ENCODE measurements at regions of chr21 and their contacts with region 1.

Region 1: DNA sequence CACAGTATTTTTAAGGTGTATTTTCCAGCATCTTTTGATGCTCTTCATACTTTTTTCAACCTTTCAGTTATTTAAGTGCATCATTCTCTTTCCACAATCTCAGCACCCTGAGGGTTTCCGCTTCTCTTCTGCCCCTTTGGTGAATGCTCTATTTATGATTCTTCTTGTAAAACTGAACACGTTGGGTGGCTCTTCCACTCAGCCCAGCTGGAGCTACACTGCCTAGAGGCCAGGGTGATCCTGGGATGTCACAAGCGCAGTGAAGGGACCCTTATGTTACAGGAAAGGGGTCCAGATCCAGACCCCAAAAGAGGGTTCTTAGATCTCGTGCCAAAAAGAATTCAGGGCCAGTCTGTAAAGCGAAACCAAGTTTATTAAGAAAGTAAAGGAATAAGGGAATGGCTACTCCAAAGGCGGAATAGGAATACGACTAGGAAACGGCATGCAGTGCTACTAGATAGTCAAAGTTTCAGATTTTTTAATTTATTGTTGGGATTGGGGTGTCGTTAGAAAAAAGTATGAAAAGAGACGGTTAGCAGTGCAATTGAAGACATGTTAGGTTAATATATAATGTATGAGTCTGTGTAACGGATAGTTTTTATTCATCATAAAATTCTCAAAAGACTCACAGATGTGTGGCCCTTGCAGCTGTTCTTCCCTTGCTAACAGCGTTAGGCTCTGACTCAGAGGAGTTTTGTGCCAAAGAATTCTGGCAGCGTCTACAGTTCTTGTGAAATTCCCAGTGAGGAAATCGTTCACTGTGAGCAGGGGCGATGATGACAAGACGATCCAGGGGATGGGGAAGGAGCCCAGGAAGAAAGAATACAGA is 14.4 kb upstream of the ERVH48-1 start:
- DNase-seq: peak; percentile 73 to 94
- H3K4me3 ChIP-seq: no peak overlapping the region
- H3K27ac ChIP-seq: peak overlapping the region in 3 of 5 donors; percentile 65 to 76 (median 75)
- H3K4me1 ChIP-seq: peaks cover 0 to 12% (median 5%) of the 10 kb centered on the region in 4 donors
- H3K27me3 ChIP-seq: no peaks in the 10 kb centered on the region
- CTCF ChIP-seq: no peak
- EP300 ChIP-seq: no peak
- POLR2A ChIP-seq: no peak

Region 2: GRCh38 chr21:42570841-42571387 is 368.9 kb before region 1 on chr21:
- intact Hi-C with region 1: no loop called
- DNase-seq: peak; percentile 30 to 73
- H3K4me3 ChIP-seq: no peak overlapping the region
- H3K27ac ChIP-seq: no peak overlapping the region
- H3K4me1 ChIP-seq: no peaks in the 10 kb centered on the region
- H3K27me3 ChIP-seq: no peaks in the 10 kb centered on the region
- CTCF ChIP-seq: no peak
- EP300 ChIP-seq: no peak
- POLR2A ChIP-seq: no peak

Region 3: GRCh38 chr21:42988236-42988965 is 48.6 kb after region 1 on chr21:
- intact Hi-C with region 1: loop called (anchors 10 kb)
- DNase-seq: no peak
- H3K4me3 ChIP-seq: no peak overlapping the region
- H3K27ac ChIP-seq: no peak overlapping the region
- H3K4me1 ChIP-seq: peaks cover 0 to 24% (median 13%) of the 10 kb centered on the region in 4 donors
- H3K27me3 ChIP-seq: no peaks in the 10 kb centered on the region
- CTCF ChIP-seq: no peak
- EP300 ChIP-seq: no peak
- POLR2A ChIP-seq: no peak

Measured in stomach (tissue), 19 donors.